Activated B cell treated with CpG ODN at 0.5 μM for 24 hours (primary cell): ENCODE measurements at regions of chr1 and their contacts with region 1.

Region 1: DNA sequence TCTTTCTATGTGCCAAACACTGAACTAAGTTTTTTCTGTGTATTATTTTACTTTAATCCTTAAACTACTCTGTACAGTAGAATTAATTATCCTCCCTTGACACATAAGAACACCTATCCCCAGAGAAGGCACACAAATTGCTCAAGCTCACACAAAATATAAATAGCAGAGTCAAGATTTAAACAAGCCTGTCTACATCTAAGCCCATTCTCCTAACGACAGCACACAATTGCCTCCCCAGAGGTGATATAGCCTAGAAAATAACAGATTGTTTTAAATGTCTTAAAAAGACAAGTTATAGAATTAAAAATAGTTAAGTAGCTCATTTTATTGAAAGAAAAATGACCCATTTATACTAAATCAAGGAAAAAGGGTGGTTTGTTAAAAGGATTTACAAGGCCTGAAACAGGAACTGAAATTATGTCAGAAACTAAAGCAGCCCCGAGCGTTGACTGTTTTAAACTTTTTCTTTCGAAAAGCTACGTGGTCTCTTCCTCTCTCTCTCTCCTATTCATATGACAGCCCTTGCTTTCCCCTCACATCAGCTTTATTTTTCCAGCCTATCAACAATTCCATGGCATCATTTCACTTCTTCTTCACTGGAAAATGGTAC is 30.5 kb downstream of the TNFSF18 start:
- DNase-seq: no peak
- ATAC-seq: peak; percentile 84
- H3K4me3 Mint-ChIP-seq: peak overlapping the region; percentile 56
- H3K27ac Mint-ChIP-seq: peak overlapping the region; percentile 90
- H3K4me1 Mint-ChIP-seq: peaks cover 61% of the 10 kb centered on the region
- H3K27me3 Mint-ChIP-seq: no peaks in the 10 kb centered on the region
- CTCF ChIP-seq: no peak

Region 2: GRCh38 chr1:172917972-172918371 is 102.3 kb before region 1 on chr1:
- CTCF ChIA-PET with region 1: no interaction called
- POLR2A ChIA-PET with region 1: no interaction called
- intact Hi-C with region 1: no loop called
- DNase-seq: no peak
- ATAC-seq: no peak
- H3K4me3 Mint-ChIP-seq: no peak overlapping the region
- H3K27ac Mint-ChIP-seq: no peak overlapping the region
- H3K4me1 Mint-ChIP-seq: peaks cover 10% of the 10 kb centered on the region
- H3K27me3 Mint-ChIP-seq: no peaks in the 10 kb centered on the region
- CTCF ChIP-seq: no peak

Region 3: GRCh38 chr1:173038875-173039554 is 18.8 kb after region 1 on chr1:
- CTCF ChIA-PET with region 1: no interaction called
- POLR2A ChIA-PET with region 1: no interaction called
- intact Hi-C with region 1: no loop called
- DNase-seq: no peak
- ATAC-seq: no peak
- H3K4me3 Mint-ChIP-seq: no peak overlapping the region
- H3K27ac Mint-ChIP-seq: no peak overlapping the region
- H3K4me1 Mint-ChIP-seq: peaks cover 8% of the 10 kb centered on the region
- H3K27me3 Mint-ChIP-seq: no peaks in the 10 kb centered on the region
- CTCF ChIP-seq: no peak

Region 4: DNA sequence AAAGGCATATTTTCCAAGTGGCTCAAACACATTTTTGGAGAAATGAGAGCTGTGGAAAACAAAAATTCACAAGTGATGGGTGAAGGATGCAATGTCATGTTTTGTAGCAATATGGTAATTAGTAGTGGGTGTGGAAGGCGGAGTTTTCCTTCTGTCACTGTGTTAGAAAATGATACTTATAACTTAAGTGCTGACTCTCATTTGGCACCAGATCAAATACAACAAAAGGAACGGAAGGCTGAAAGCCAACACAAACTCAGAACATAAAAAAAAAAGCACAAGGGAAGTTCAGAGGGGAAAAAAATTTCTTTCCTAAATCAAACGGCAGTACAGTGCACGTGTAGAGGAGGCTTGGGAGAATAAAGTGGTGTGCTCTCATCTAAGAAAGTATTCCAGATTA is 30.6 kb after region 1 on chr1 and contains the start of gene TNFSF18:
- CTCF ChIA-PET with region 1: no interaction called
- POLR2A ChIA-PET with region 1: no interaction called
- intact Hi-C with region 1: loop called (anchors 2 kb)
- DNase-seq: no peak
- ATAC-seq: no peak
- H3K4me3 Mint-ChIP-seq: no peak within 1 kb of the TSS
- H3K27ac Mint-ChIP-seq: no peak within 1 kb of the TSS
- H3K4me1 Mint-ChIP-seq: peaks cover 27% of the 10 kb centered on the region
- H3K27me3 Mint-ChIP-seq: peaks cover 3% of the 10 kb centered on the region
- CTCF ChIP-seq: no peak
- total RNA-seq, gene TNFSF18: not detected in 2 replicates

Region 5: DNA sequence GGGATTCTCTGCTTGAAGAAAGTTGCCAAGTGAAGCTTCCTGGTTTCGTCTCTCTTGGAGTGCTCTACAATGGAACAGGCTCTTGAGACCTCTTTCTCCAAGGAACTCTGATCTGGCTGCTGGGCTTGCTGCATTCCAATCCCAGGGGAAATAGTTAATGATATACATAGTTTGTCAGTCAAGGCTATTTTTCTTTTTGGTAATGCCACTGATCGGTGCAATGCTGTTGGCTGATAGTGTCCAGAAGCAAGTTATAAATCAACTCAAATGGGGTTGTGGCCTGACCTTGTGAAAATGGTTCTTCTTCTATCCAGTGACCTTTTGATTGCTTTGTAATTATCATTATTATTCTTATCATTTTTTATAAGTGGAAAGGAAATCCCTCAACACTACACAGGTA is 78.9 kb after region 1 on chr1:
- CTCF ChIA-PET with region 1: no interaction called
- POLR2A ChIA-PET with region 1: no interaction called
- intact Hi-C with region 1: no loop called
- DNase-seq: no peak
- ATAC-seq: no peak
- H3K4me3 Mint-ChIP-seq: no peak overlapping the region
- H3K27ac Mint-ChIP-seq: no peak overlapping the region
- H3K4me1 Mint-ChIP-seq: no peaks in the 10 kb centered on the region
- H3K27me3 Mint-ChIP-seq: no peaks in the 10 kb centered on the region
- CTCF ChIP-seq: no peak

Region 6: DNA sequence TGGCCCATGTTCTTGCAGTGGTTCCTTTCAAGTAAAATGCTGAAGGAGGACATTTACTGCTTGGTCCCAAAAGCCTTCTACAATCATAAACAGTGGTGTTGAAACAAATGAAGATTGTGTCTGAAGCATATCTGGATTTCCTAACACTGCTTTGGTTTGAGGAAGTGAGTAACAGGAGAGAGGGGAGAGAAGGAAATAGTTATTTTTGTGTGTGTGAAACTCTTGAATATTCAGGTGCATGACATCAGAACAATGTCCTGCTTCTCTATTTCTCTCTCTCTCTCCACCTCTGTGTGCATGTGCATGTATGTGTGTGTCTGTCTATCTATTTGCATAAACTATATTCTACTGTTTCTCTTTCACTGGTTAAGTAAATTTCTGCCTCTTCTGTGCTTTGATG is 91.9 kb after region 1 on chr1:
- CTCF ChIA-PET with region 1: no interaction called
- POLR2A ChIA-PET with region 1: no interaction called
- intact Hi-C with region 1: loop called (anchors 2 kb)
- DNase-seq: no peak
- ATAC-seq: peak; percentile 90
- H3K4me3 Mint-ChIP-seq: peak overlapping the region; percentile 8
- H3K27ac Mint-ChIP-seq: peak overlapping the region; percentile 46
- H3K4me1 Mint-ChIP-seq: peaks cover 39% of the 10 kb centered on the region
- H3K27me3 Mint-ChIP-seq: no peaks in the 10 kb centered on the region
- CTCF ChIP-seq: no peak

Region 7: DNA sequence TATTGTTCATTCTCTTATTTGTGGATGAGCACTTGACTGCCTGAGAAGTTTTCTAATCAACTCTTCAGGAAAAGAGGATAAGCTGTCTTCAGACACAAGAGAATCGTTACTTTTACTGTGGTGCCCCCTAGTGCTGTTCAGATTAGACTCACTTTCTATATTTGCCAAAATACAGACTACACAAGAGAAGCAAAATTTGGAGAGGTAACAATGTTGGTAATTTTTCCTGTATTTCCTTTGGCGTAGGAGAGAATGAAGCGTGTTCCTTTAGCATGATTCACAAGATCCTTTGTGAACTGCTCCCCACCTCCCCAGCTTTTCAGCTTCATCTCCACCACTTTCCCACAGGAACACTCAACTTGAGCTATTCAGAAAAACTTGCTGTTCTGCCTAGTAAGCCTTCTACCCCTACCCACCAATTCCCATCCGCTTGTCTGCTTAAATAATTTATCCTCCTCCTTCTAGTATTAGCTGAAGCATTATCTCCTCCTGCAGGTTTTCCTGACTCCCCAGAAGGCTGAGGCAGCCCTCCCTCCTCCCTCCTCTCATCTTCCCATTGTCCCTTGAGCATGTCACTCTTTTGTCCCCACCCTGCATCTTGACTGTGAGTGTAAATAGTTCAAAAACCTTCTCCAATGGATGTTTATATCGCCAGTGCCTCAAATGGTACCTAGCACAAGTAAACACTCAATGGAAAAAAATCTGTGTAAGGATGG is 182.3 kb after region 1 on chr1:
- CTCF ChIA-PET with region 1: interaction called, 4 read pairs
- POLR2A ChIA-PET with region 1: no interaction called
- intact Hi-C with region 1: loop called (anchors 5 kb)
- DNase-seq: no peak
- ATAC-seq: no peak
- H3K4me3 Mint-ChIP-seq: no peak overlapping the region
- H3K27ac Mint-ChIP-seq: no peak overlapping the region
- H3K4me1 Mint-ChIP-seq: peaks cover 50% of the 10 kb centered on the region
- H3K27me3 Mint-ChIP-seq: no peaks in the 10 kb centered on the region
- CTCF ChIP-seq: no peak